ENCODE measurements at regions of chr10 and their contacts with region 1.

Region 1: DNA sequence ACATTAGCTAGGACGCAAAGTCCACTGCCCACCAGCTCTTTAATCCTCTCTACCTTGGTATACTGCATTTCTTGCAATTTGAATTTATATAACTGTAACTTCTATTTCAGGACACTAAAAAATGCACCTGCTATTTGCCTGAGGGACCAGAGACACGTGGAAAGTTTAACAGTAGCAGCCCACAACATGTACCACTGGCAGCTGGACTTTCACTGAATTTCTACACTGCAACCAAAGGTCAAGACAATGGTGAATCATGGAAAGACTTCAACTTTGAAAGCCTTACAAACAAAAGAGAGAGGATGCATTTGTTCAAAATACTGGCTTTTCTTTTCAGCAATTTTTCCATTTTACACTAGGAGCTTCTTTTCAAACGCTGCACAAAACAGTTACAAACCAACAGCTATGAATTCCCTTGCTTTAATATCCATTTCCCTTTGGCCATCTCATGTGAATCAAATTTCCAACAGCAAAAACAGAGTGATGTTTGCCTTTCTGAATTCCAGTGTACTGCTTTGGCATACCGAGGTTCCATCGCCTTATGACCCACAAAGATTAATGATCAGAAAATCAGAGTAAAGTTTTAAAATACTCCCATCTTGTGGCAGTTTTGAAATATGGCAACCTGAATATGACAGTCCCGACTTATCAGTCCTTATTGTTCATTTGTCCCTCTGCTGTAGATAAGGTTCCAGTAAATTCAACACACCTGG is 29.9 kb upstream of the HNRNPH3 start:
- DNase-seq: no peak
- ATAC-seq: peak in 3 of 4 donors; percentile 65 to 80 (median 72)
- H3K4me3 ChIP-seq: no peak overlapping the region
- H3K27ac ChIP-seq: no peak overlapping the region
- H3K4me1 ChIP-seq: peaks cover 0 to 6% (median 1%) of the 10 kb centered on the region in 12 donors
- H3K27me3 ChIP-seq: no peaks in the 10 kb centered on the region
- CTCF ChIP-seq: peak; percentile 46 to 69 (median 53)
- POLR2A ChIP-seq: no peak

Region 2: GRCh38 chr10:67861750-67862460 is 440.0 kb before region 1 on chr10:
- intact Hi-C with region 1: loop called in 7 of 10 experiments (anchors 5 to 10 kb)
- DNase-seq: no peak
- ATAC-seq: no peak
- H3K4me3 ChIP-seq: no peak overlapping the region
- H3K27ac ChIP-seq: no peak overlapping the region
- H3K4me1 ChIP-seq: peaks cover 0 to 5% (median 0%) of the 10 kb centered on the region in 12 donors
- H3K27me3 ChIP-seq: no peaks in the 10 kb centered on the region
- CTCF ChIP-seq: no peak
- POLR2A ChIP-seq: no peak

Region 3: GRCh38 chr10:68082872-68083271 is 219.1 kb before region 1 on chr10:
- intact Hi-C with region 1: loop called in 7 of 10 experiments (anchors 5 to 10 kb)
- DNase-seq: no peak
- ATAC-seq: peak in 1 of 4 donors; percentile 48
- H3K4me3 ChIP-seq: no peak overlapping the region
- H3K27ac ChIP-seq: peak overlapping the region in 2 of 12 donors; percentile 42 to 44
- H3K4me1 ChIP-seq: peaks cover 0 to 26% (median 0%) of the 10 kb centered on the region in 12 donors
- H3K27me3 ChIP-seq: no peaks in the 10 kb centered on the region
- CTCF ChIP-seq: peak in 9 of 12 donors; percentile 29 to 60 (median 48)
- POLR2A ChIP-seq: no peak

Region 4: DNA sequence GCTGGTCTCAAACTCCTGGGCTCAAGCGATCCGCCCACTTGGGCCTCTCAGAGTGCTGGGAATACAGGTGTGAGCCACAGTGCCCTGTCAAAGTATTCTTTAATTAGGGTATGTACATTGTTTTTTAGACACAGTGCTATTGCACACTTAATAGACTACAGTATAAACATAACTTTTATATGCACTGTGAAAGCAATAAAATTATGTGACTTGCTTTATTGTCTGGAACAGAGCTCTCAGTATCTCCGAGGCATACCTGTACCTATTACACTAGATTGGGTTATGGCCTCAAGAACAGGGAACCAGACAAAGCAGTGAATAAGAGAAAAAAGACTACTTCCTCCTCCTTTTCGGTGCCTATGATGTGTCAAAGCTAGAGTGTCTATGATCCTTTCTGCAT is 83.2 kb before region 1 on chr10:
- intact Hi-C with region 1: loop called (anchors 2 to 10 kb)
- DNase-seq: no peak
- ATAC-seq: no peak
- H3K4me3 ChIP-seq: no peak overlapping the region
- H3K27ac ChIP-seq: no peak overlapping the region
- H3K4me1 ChIP-seq: no peaks in the 10 kb centered on the region
- H3K27me3 ChIP-seq: no peaks in the 10 kb centered on the region
- CTCF ChIP-seq: no peak
- POLR2A ChIP-seq: no peak

Region 5: GRCh38 chr10:68446179-68446578 is 144.2 kb after region 1 on chr10:
- intact Hi-C with region 1: no loop called
- DNase-seq: no peak
- ATAC-seq: no peak
- H3K4me3 ChIP-seq: no peak overlapping the region
- H3K27ac ChIP-seq: no peak overlapping the region
- H3K4me1 ChIP-seq: no peaks in the 10 kb centered on the region
- H3K27me3 ChIP-seq: no peaks in the 10 kb centered on the region
- CTCF ChIP-seq: no peak
- POLR2A ChIP-seq: no peak

Measured in heart left ventricle (tissue), 16 donors.